CD4-positive, alpha-beta T cell (primary cell): ENCODE measurements at regions of chr11 and their contacts with region 1.

Region 1: GRCh38 chr11:134024420-134025081 is 44.3 kb upstream of the JAM3 start:
- DNase-seq: no peak
- ATAC-seq: no peak
- H3K4me3 ChIP-seq: no peak overlapping the region
- H3K4me3 Mint-ChIP-seq: no peak overlapping the region
- H3K27ac ChIP-seq: no peak overlapping the region
- H3K27ac Mint-ChIP-seq: no peak overlapping the region
- H3K4me1 ChIP-seq: peaks cover 27% of the 10 kb centered on the region
- H3K4me1 Mint-ChIP-seq: peaks cover 24% of the 10 kb centered on the region
- H3K27me3 ChIP-seq: peaks cover 0 to 5% of the 10 kb centered on the region in 2 experiments
- H3K27me3 Mint-ChIP-seq: peaks cover 11% of the 10 kb centered on the region
- CTCF ChIP-seq: no peak

Region 2: DNA sequence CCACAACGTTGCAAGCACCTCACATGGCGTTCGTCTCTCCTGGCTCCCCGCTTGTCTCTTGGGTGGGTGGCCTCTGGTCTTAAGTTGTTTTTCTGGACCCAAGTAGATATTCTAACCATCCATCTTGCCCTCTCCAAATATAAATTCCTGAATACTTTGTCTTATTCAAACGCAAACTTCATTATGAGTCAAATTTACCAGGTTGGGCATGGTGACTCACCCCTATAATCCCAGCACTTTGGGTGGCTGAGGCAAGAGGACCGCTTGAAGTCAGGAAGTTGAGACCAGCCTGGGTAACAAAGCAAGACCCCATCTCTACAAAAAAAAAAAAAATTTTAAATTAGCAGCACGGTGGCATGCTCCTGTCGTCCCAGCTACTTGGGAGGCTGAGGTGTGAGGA is 62.7 kb before region 1 on chr11:
- CTCF ChIA-PET with region 1: no interaction called
- POLR2A ChIA-PET with region 1: no interaction called
- intact Hi-C with region 1: no loop called
- DNase-seq: no peak
- ATAC-seq: no peak
- H3K4me3 ChIP-seq: no peak overlapping the region
- H3K4me3 Mint-ChIP-seq: no peak overlapping the region
- H3K27ac ChIP-seq: no peak overlapping the region
- H3K27ac Mint-ChIP-seq: no peak overlapping the region
- H3K4me1 ChIP-seq: peaks cover 10% of the 10 kb centered on the region
- H3K4me1 Mint-ChIP-seq: peaks cover 10% of the 10 kb centered on the region
- H3K27me3 ChIP-seq: peaks cover 0 to 2% of the 10 kb centered on the region in 2 experiments
- H3K27me3 Mint-ChIP-seq: peaks cover 9% of the 10 kb centered on the region
- CTCF ChIP-seq: no peak

Region 3: GRCh38 chr11:133988686-133989410 is 35.7 kb before region 1 on chr11:
- CTCF ChIA-PET with region 1: no interaction called
- POLR2A ChIA-PET with region 1: no interaction called
- intact Hi-C with region 1: loop called in 1 of 2 experiments (anchors 5 kb)
- DNase-seq: no peak
- ATAC-seq: no peak
- H3K4me3 ChIP-seq: no peak overlapping the region
- H3K4me3 Mint-ChIP-seq: no peak overlapping the region
- H3K27ac ChIP-seq: no peak overlapping the region
- H3K27ac Mint-ChIP-seq: no peak overlapping the region
- H3K4me1 ChIP-seq: no peaks in the 10 kb centered on the region
- H3K4me1 Mint-ChIP-seq: no peaks in the 10 kb centered on the region
- H3K27me3 ChIP-seq: no peaks in the 10 kb centered on the region
- H3K27me3 Mint-ChIP-seq: no peaks in the 10 kb centered on the region
- CTCF ChIP-seq: no peak

Region 4: DNA sequence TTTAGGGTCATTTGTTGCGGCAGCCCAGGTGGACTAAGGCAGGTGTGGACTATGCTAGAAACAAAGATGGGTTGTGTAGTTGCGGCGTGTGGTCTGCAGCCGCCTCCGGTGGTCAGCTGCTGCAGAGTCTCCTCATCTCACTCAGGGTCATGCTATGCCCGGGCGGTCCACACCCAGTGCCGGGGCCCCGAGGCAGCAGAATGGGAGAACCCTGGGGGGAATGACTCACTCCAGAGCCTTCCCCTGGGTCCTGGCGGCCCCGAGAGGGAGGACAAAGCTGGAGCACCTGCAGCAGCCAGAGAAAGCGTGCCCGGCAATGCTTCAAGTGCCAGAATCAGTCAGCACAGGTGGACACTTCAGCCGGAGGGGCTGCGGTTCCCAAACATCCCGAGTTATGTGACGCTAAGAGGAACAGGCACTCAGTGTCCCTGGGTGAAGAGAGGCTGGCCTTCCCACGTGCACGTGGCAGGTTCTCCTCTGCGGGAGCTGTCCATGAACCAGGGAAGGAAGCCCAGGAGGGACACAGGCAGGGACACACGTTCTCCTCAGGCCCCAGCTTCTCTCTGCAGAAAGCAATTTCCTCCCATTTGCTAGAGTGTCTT is 677.1 kb after region 1 on chr11:
- CTCF ChIA-PET with region 1: no interaction called
- POLR2A ChIA-PET with region 1: no interaction called
- intact Hi-C with region 1: no loop called
- DNase-seq: no peak
- ATAC-seq: no peak
- H3K4me3 ChIP-seq: no peak overlapping the region
- H3K4me3 Mint-ChIP-seq: no peak overlapping the region
- H3K27ac ChIP-seq: no peak overlapping the region
- H3K27ac Mint-ChIP-seq: no peak overlapping the region
- H3K4me1 ChIP-seq: no peaks in the 10 kb centered on the region
- H3K4me1 Mint-ChIP-seq: no peaks in the 10 kb centered on the region
- H3K27me3 ChIP-seq: peaks cover 0 to 6% of the 10 kb centered on the region in 2 experiments
- H3K27me3 Mint-ChIP-seq: peaks cover 47% of the 10 kb centered on the region
- CTCF ChIP-seq: no peak